ENCODE measurements at regions of chr17 and their contacts with region 1.

Region 1: DNA sequence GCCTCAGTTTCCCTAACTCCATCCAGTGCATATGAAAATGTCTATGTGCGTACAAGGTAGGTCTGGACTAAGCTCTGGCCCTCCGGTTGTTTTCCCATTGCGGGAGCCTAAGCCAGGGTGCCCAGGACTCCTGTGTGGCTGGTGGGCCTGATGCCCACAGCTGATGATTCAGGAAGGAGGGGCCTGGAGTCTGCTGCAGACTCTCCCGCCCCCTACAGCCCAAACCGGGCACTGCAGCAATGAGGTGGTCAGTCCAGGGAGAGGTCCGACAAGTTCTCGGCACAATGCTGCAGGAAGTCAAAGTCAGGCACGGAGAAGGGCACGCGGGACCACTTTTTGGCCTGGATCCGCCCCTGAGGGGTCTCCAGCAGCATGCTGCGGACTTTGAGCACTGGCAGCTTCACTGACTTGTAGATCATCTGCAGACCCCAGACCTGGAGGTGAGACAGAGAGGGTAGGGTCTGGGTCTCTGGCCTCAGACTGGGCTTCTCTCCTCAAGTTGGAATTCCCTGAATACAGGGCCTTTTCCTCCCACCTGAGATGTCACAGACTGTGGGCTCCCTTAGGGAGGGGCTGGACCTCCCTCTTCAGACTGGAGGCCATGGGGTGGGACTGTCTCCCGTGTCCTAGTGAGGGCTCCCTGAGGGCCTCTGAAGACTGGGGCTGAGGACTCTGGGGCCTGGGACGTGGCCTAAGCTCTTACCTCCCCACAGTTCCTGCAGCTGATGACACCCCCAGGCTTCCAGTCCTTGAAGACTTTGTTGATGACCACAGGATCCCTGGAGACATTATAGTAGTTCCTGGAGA is 3.4 kb upstream of the ZNF385C start:
- DNase-seq: no peak
- ATAC-seq: peak; percentile 87
- H3K4me3 ChIP-seq: no peak overlapping the region
- H3K27ac ChIP-seq: no peak overlapping the region
- H3K4me1 ChIP-seq: peaks cover 5% of the 10 kb centered on the region
- H3K27me3 ChIP-seq: peaks cover 1 to 6% of the 10 kb centered on the region in 2 experiments; a peak in 1 of 4 replicates
- CTCF ChIP-seq: peak; percentile 84 to 92 (median 92)
- EP300 ChIP-seq: no peak
- POLR2A ChIP-seq: peak; percentile 36; the same call in 1 of the 2 replicates
- RAD21 ChIP-seq: peak; percentile 81

Region 2: GRCh38 chr17:42087736-42088705 is 13.7 kb before region 1 on chr17:
- CTCF ChIA-PET with region 1: interaction called, 10 read pairs
- POLR2A ChIA-PET with region 1: no interaction called
- RAD21 ChIA-PET with region 1: no interaction called
- SMC1A ChIA-PET with region 1: interaction called, 4 read pairs
- in situ Hi-C with region 1: no loop called
- intact Hi-C with region 1: no loop called
- DNase-seq: no peak
- ATAC-seq: no peak
- H3K4me3 ChIP-seq: no peak overlapping the region
- H3K27ac ChIP-seq: no peak overlapping the region
- H3K4me1 ChIP-seq: no peaks in the 10 kb centered on the region
- H3K27me3 ChIP-seq: no peaks in the 10 kb centered on the region; a peak in 2 of 4 replicates
- CTCF ChIP-seq: no peak
- EP300 ChIP-seq: no peak
- POLR2A ChIP-seq: no peak
- RAD21 ChIP-seq: no peak

Region 3: GRCh38 chr17:42112552-42113176 is 10.9 kb after region 1 on chr17 and contains the start of gene DHX58:
- CTCF ChIA-PET with region 1: interaction called, 11 read pairs
- POLR2A ChIA-PET with region 1: interaction called, 3 read pairs
- RAD21 ChIA-PET with region 1: interaction called, 5 read pairs
- SMC1A ChIA-PET with region 1: interaction called, 7 read pairs
- in situ Hi-C with region 1: no loop called
- intact Hi-C with region 1: no loop called
- DNase-seq: peak; percentile 90
- ATAC-seq: peak; percentile 85
- H3K4me3 ChIP-seq: peak within 1 kb of the TSS; percentile 79
- H3K27ac ChIP-seq: peak within 1 kb of the TSS; percentile 98
- H3K4me1 ChIP-seq: peaks cover 37% of the 10 kb centered on the region
- H3K27me3 ChIP-seq: no peaks in the 10 kb centered on the region
- CTCF ChIP-seq: no peak
- EP300 ChIP-seq: no peak
- POLR2A ChIP-seq: peak; percentile 94
- RAD21 ChIP-seq: no peak
- polyA plus RNA-seq, gene DHX58: 3.5 to 3.7 TPM